Right ventricle myocardium inferior (tissue), 1 donor: ENCODE measurements at regions of chr22 and their contacts with region 1.

Region 1: GRCh38 chr22:25172153-25172552 is 27.5 kb upstream of the CRYBB3 start:
- DNase-seq: no peak
- ATAC-seq: peak; percentile 54

Region 2: GRCh38 chr22:25081409-25081824 is 90.7 kb before region 1 on chr22:
- intact Hi-C with region 1: loop called (anchors 1 kb)
- DNase-seq: no peak
- ATAC-seq: no peak

Region 3: DNA sequence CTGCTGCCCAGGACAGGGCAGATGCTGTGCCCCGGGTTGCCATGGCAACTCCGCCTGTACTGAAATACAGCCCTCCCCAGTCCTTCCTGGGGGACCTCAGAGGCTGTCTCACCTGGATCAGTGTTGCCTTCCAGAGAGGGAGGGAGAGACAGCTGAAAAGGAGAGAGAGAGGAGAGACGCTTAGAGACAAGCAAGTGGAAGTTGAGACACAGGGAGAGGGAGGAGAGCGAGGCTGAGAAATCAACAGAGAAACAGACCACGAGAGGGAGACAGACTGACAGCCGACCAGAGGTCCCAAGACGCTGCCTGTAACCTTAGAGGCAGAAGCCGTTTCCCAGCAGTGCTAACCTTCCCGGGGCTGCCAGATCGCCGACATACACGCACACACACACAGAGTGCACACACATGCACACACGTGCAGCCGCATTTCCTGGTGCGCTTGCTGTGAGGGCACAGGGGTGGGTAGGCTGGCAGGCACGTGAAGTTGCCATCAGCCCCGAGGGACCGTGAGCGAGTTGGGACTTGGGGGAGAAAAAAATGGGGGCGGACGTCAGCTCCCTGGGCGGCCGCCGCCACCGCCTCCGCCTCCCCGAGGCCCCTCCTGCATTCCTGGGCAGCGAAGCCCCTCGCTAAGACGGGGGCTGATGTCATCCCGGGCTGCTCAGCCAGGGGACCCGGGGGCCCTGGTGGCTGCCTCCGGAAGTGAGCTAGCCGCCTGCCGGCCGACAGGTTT is 61.1 kb before region 1 on chr22:
- intact Hi-C with region 1: loop called (anchors 1 kb)
- DNase-seq: no peak
- ATAC-seq: peak; percentile 85